ENCODE measurements at regions of chr2 and their contacts with region 1.

Region 1: GRCh38 chr2:57376985-57377384 is 669.6 kb upstream of the VRK2 start:
- DNase-seq: no peak
- ATAC-seq: no peak
- H3K4me3 ChIP-seq: no peak overlapping the region
- H3K27ac ChIP-seq: no peak overlapping the region
- H3K4me1 ChIP-seq: no peaks in the 10 kb centered on the region
- H3K27me3 ChIP-seq: no peaks in the 10 kb centered on the region
- CTCF ChIP-seq: 0 out of 2 replicates have a peak, but pooled peaks have one; percentile 5
- EP300 ChIP-seq: no peak
- POLR2A ChIP-seq: no peak
- RAD21 ChIP-seq: no peak

Region 2: GRCh38 chr2:57075226-57075625 is 301.8 kb before region 1 on chr2:
- CTCF ChIA-PET with region 1: no interaction called
- POLR2A ChIA-PET with region 1: no interaction called
- in situ Hi-C with region 1: no loop called
- intact Hi-C with region 1: no loop called
- DNase-seq: no peak
- ATAC-seq: no peak
- H3K4me3 ChIP-seq: no peak overlapping the region
- H3K27ac ChIP-seq: no peak overlapping the region
- H3K4me1 ChIP-seq: no peaks in the 10 kb centered on the region
- H3K27me3 ChIP-seq: no peaks in the 10 kb centered on the region
- CTCF ChIP-seq: no peak
- EP300 ChIP-seq: no peak
- POLR2A ChIP-seq: no peak
- RAD21 ChIP-seq: no peak

Region 3: GRCh38 chr2:57497489-57498096 is 120.6 kb after region 1 on chr2:
- CTCF ChIA-PET with region 1: no interaction called
- POLR2A ChIA-PET with region 1: no interaction called
- in situ Hi-C with region 1: loop called (anchors 10 kb)
- intact Hi-C with region 1: loop called (anchors 1 kb)
- DNase-seq: peak; percentile 50
- ATAC-seq: peak; percentile 88
- H3K4me3 ChIP-seq: no peak overlapping the region
- H3K27ac ChIP-seq: no peak overlapping the region
- H3K4me1 ChIP-seq: no peaks in the 10 kb centered on the region
- H3K27me3 ChIP-seq: no peaks in the 10 kb centered on the region; a peak in 1 of 5 replicates
- CTCF ChIP-seq: peak; percentile 78
- EP300 ChIP-seq: no peak
- POLR2A ChIP-seq: no peak
- RAD21 ChIP-seq: peak; percentile 41; the same call in 1 of the 2 replicates

Measured in HepG2 (cell line).